Mammary epithelial cell (primary cell): ENCODE measurements at regions of chr10 and their contacts with region 1.

Region 1: DNA sequence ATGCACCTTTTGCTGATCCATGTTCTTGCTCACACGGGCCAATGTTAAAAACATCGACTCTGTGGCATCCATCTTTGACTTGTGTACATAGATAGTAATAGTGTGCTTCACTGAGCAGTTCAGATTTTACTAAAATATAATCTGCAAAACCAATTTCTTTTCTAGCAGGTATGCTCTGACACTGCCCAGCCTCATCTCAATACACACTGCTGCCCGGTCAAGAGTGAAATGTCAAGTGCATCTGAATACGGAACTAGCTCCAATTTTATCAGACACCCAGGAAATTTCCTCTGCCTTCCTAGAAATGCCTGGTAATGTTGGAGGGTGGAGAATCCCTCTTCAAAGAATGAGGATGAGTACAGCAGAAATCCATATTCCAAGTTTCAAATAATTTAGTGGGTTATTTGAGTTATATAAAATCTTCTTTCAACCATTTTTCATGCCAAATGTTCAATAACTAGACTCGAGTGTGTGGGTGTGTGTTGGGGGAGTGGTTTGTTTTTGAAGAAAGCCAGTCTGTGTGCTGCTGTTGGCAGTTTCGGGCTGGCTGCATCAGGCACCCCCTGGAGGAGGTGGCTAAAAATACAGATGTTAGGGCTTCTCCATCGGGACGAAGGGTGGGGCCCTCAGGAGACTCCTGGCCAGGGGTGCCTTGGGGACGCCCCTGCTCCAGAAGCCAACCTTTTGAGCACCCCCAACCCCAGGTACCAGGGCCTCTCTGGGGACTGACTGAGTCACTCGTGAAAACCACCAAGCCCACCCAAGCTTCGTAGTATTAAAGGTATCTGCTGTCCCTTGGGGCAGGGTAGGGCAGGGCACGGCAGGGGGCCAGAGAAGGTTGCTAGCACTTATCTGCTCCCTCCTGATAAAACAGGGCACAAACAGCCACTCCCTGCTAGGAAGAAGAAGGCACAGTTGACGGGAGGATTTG is 15.4 kb downstream of the CTBP2 start:
- DNase-seq: peak; percentile 65
- H3K4me3 ChIP-seq: no peak overlapping the region
- H3K27ac ChIP-seq: peak overlapping the region; percentile 34
- H3K4me1 ChIP-seq: peaks cover 46% of the 10 kb centered on the region
- H3K27me3 ChIP-seq: no peaks in the 10 kb centered on the region
- CTCF ChIP-seq: peak; percentile 35 to 70

Region 2: DNA sequence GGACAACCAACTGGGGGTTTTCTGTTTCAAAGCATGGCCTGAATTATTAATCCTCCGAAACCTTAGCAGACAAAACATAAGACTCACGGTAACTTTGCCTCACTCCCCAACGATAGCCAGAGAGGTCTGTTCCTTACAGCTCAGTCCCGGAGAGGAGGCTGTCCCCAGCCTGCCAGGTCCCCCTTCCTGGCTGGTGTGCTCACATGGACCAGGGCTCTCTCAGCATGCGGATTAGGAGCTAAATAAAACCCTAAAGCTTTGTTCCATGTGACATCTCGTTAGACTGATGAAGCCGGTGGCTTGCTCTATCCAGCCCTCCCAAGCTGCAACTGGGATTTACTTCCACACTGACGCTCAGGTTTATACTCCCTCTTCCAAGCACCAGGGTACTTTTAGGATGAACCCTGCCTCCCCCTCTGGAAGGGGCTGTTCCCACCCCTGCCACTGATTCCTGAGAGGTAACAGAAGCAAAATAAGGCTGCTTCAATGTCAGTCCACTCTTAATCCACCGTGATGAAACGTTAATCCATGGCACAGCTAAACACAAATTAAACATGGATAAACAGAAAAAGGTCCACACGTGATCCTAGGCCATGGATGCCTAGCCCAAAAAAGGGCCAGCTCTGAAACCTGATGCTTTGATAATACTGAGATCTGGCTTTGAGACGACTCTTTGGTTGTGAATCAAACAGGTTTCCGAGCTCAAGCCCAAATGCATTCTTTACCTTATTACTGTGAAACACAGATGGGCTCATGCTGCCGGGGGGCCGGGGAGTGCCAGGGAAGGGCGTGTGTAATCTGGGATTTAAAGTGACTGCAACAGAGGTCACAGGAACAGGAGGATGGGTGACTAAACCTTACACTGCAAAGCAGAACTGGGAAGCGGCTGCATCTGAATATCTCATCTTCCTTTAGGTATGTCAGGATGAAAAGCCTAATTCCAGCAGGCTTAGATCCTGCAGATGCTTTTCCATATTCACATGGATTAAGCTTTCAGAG is 116.8 kb before region 1 on chr10:
- CTCF ChIA-PET with region 1: no interaction called
- dilution Hi-C with region 1: no loop called
- in situ Hi-C with region 1: no loop called
- intact Hi-C with region 1: no loop called
- DNase-seq: no peak
- H3K4me3 ChIP-seq: no peak overlapping the region
- H3K27ac ChIP-seq: no peak overlapping the region
- H3K4me1 ChIP-seq: peaks cover 4% of the 10 kb centered on the region
- H3K27me3 ChIP-seq: no peaks in the 10 kb centered on the region
- CTCF ChIP-seq: no peak

Region 3: DNA sequence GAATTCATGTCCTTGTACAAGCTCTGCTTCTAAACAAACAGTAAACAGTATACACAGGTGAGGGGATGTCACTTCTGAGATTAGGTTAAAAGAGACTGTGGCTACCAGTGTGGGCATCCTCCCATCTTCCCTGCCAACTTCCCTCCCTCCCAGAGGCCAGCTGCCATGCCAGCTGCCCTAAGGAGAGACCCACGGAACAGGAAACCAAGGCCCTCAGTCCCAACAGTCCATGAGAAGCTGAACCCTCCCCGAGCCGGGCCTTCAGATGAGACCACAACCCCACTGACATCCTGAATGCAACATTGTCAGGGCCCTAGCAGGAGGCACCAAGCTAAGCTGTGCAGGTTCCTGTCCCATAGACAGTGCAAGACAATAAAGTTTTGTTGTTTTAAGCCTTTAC is 90.7 kb before region 1 on chr10:
- CTCF ChIA-PET with region 1: no interaction called
- dilution Hi-C with region 1: no loop called
- in situ Hi-C with region 1: no loop called
- intact Hi-C with region 1: no loop called
- DNase-seq: no peak
- H3K4me3 ChIP-seq: no peak overlapping the region
- H3K27ac ChIP-seq: no peak overlapping the region
- H3K4me1 ChIP-seq: peaks cover 13% of the 10 kb centered on the region
- H3K27me3 ChIP-seq: no peaks in the 10 kb centered on the region
- CTCF ChIP-seq: no peak

Region 4: DNA sequence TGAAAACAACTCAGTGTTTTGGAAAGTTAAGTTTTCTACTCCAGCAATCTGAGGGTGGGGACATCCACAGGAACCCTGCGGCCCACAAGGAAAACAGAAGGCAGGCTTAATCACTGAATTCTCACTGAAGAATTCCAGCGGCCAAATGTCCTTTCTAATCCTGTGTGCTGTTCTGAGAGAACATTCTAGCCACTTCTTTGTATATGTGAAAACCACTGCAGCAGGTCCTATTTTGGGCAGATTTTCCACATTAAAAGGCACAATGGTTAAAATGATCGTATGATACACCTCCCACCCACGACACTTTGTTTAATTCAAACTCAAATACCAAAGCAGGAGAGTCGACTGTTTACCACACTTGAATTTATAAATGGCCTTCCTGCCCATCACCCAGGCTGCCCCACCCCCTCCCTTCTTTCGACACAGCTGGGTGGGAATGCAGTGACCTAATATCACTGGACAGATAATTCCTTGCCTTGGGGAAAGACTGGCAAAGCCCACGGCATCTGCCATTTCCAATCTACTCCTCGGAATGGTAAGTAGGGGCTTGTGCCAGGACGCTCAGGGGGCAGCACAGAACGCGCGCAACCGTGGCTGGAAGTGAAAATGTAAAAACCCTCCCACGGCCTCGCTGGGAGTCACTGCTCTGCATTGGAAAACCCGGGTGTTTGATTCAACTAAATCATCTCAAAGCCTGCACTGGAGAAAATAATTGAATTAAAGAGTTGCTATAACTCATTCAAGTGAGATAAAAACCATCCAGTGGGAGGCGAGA is 51.6 kb before region 1 on chr10:
- CTCF ChIA-PET with region 1: no interaction called
- dilution Hi-C with region 1: loop called (anchors 5 kb)
- in situ Hi-C with region 1: no loop called
- intact Hi-C with region 1: no loop called
- DNase-seq: no peak
- H3K4me3 ChIP-seq: no peak overlapping the region
- H3K27ac ChIP-seq: no peak overlapping the region
- H3K4me1 ChIP-seq: peaks cover 23% of the 10 kb centered on the region
- H3K27me3 ChIP-seq: no peaks in the 10 kb centered on the region
- CTCF ChIP-seq: no peak

Region 5: GRCh38 chr10:125123476-125124114 is 21.4 kb before region 1 on chr10:
- CTCF ChIA-PET with region 1: no interaction called
- dilution Hi-C with region 1: no loop called
- in situ Hi-C with region 1: no loop called
- intact Hi-C with region 1: loop called (anchors 2 kb)
- DNase-seq: peak; percentile 100
- H3K4me3 ChIP-seq: peak overlapping the region in 2 of 3 experiments; percentile 13 to 14
- H3K27ac ChIP-seq: peak overlapping the region; percentile 98
- H3K4me1 ChIP-seq: peaks cover 71% of the 10 kb centered on the region
- H3K27me3 ChIP-seq: no peaks in the 10 kb centered on the region
- CTCF ChIP-seq: peak in 1 of 2 donors; percentile 1

Region 6: DNA sequence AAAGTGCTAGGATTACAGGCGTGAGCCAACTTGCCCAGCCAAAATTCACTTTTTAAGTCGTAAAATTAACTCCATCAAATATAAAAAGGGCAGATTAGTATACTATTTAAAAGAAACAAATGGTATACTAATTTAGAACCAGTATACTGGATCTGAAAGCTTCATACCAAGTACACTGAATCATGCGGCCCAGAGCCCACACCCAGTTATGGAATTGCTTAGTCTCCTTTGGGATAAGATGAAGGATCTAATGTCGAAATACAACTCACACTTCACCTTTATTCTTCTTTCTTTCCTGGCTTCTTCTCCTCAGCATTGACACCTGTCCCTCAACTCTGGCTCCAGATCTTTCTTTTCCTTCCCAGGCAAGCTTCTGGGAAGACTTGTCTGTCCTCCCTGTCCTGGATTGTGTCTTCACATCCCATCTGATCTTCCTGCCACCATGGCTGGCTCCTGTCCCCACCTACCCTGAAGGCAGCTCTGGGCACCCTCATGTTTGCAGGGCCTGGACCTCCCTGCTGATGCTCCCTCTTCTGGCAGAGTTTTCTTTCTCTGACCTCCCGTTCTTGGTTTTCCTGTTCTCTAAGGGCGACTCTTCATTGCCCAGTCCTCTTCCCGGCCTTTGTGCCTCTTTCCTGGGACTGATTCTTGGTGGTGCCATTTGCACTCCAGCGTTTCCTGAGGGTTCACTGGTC is 73.2 kb after region 1 on chr10:
- CTCF ChIA-PET with region 1: no interaction called
- dilution Hi-C with region 1: no loop called
- in situ Hi-C with region 1: no loop called
- intact Hi-C with region 1: no loop called
- DNase-seq: no peak
- H3K4me3 ChIP-seq: no peak overlapping the region
- H3K27ac ChIP-seq: no peak overlapping the region
- H3K4me1 ChIP-seq: peaks cover 8% of the 10 kb centered on the region
- H3K27me3 ChIP-seq: no peaks in the 10 kb centered on the region
- CTCF ChIP-seq: no peak

Region 7: DNA sequence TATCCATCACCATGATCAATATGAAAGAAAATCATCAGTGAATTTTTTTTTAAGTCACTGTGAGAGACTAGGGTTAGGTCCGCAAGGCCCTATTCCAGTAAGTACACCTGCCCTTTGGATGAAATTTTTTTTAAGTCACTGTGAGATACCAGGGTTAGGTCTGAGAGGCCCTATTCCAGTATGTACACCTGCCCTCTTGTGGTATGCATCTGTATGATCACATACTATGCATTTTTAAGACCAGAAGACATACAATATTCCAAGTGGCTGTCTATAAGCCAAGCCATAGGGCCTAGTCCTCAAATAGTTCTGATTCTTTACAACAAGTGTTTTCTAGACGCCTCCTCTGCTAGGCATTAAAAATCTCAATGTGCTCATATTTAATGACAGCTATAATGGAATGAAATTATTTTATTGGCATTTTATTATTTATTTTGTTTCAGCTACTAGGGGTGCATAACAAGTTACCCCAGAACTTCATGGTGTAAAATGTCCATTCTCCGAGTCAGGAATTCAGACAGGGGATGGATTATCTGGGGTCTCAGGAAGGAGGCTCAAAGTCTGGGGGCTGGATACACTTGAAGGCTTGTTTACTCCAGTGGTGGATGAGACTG is 484.9 kb after region 1 on chr10:
- CTCF ChIA-PET with region 1: no interaction called
- dilution Hi-C with region 1: no loop called
- in situ Hi-C with region 1: loop called in 1 of 2 experiments (anchors 25 kb)
- intact Hi-C with region 1: loop called (anchors 5 kb)
- DNase-seq: peak; percentile 46
- H3K4me3 ChIP-seq: no peak overlapping the region
- H3K27ac ChIP-seq: no peak overlapping the region
- H3K4me1 ChIP-seq: no peaks in the 10 kb centered on the region
- H3K27me3 ChIP-seq: no peaks in the 10 kb centered on the region
- CTCF ChIP-seq: peak; percentile 56 to 78